Astrocyte of the spinal cord (primary cell): ENCODE measurements at regions of chr2 and their contacts with region 1.

Region 1: DNA sequence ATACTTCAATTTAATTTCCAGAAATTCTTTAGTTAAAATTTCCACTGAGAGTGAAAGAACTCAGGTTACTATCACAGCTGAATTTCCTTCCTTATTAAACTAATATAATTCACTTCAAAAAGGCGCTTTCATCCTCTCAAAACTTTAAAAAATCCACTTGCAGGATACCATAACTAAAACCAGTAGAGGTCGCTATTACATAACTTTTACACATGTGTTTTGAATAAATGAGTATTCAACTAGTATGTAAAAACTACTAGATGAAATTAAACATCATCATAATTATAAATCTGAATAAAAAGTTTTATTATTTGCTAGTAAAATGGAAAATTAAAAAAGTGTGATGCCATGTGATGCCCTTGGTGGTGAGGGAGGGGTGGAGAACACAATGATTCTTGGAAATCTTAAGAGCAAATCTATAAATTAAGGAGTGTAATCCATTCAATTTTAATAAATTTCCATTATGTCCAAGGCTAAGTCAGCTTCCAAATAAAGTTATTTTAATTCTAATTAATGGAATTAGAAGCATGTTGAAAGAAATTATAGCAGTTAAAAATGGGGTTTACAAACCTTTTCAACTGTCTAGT is 61.4 kb downstream of the SOS1 start:
- DNase-seq: peak; percentile 61
- H3K4me3 ChIP-seq: no peak overlapping the region
- CTCF ChIP-seq: peak; percentile 46

Region 2: GRCh38 chr2:38771632-38772031 is 287.8 kb before region 1 on chr2:
- in situ Hi-C with region 1: no loop called
- DNase-seq: no peak
- H3K4me3 ChIP-seq: no peak overlapping the region
- CTCF ChIP-seq: no peak

Region 3: GRCh38 chr2:38830526-38831159 is 228.8 kb before region 1 on chr2:
- in situ Hi-C with region 1: no loop called
- DNase-seq: no peak
- H3K4me3 ChIP-seq: no peak overlapping the region
- CTCF ChIP-seq: no peak

Region 4: DNA sequence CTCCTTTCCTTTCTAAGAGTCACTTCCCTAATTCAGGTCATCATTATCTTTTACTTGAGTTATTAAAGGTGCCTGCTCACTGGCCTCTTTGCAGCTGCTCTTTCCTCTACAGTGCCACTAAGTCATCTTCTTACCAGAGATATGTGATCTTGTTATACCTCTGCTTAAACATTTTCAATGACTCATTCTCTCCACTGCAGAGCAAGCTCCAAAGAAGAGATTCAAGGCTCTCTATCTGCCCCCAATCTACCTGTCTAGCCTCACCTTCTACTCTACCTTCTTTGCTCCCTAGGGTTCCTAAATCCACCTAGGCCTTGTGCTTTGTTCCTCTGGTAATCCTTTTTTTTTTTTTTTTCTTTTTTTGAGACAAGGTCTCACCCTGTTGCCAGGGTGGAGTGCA is 166.6 kb before region 1 on chr2:
- in situ Hi-C with region 1: no loop called
- DNase-seq: no peak
- H3K4me3 ChIP-seq: no peak overlapping the region
- CTCF ChIP-seq: no peak

Region 5: DNA sequence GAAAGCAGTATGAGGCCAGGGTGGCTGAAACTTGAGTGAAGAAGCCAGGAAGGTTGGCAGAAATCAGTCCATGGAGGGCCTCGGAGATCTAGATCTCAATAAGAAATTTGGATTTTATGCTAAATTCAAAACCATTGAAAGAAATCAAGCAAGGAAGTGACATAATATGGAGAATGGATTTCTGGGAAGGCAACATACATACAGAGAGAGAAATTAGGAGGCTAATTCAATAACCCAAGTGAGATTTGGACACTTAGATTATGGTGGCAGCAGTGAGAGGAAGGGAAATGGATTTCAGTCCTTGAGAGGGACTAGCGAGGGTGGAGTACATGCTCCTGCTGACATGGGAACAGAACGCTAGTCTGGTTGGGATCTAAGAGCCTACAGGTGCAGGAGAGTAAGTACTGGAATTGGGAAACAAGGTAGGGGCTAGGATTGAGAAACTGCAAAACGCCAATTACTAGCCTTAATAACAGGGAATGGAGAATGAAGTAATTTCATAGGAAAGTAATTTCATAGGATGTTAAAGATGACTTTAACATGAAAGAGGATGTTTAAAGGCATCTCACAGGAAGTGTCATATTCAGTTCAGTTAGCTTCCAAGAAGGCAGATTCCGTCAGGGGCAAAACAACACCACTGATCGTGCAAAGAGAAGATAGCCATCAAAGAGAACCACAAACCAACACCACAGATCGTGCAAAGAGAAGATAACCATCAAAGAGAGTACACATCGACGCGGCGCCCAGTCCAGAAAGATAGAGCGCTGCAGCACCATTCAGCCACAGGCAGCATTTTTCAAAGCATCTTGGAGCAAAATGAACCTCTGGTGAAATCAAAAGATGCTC is 157.1 kb after region 1 on chr2:
- in situ Hi-C with region 1: loop called (anchors 25 kb)
- DNase-seq: no peak
- H3K4me3 ChIP-seq: no peak overlapping the region
- CTCF ChIP-seq: no peak

Region 6: DNA sequence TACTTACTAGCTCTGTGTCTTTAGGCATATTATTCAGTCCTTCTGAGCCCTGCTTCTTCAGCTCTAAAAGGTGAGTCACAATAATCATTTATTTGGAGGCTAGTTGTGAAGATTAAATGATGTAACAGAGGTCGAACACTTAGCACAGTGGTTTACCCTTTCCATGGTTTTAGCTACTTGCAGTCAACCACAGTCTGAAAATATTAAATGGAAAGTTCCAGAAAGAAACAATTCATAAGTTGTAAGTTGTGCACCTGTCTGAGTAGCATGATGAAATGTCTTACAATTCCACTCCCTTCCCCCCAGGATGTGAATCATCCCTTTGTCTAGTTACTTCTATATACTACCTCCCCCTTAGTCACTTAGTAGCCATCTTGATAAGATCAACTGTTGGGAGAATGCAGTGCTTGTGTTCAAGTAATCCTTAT is 937.2 kb after region 1 on chr2:
- in situ Hi-C with region 1: no loop called
- DNase-seq: peak; percentile 94
- H3K4me3 ChIP-seq: no peak overlapping the region
- CTCF ChIP-seq: no peak